Ovary (tissue), 10 donors: ENCODE measurements at regions of chr12 and their contacts with region 1.

Region 1: GRCh38 chr12:93243689-93244513 is 133.8 kb upstream of the NUDT4 start:
- DNase-seq: peak in 2 of 5 donors; percentile 40 to 57
- H3K4me3 ChIP-seq: no peak overlapping the region
- H3K27ac ChIP-seq: no peak overlapping the region
- H3K4me1 ChIP-seq: peaks cover 10% of the 10 kb centered on the region
- H3K27me3 ChIP-seq: no peaks in the 10 kb centered on the region
- CTCF ChIP-seq: no peak
- EP300 ChIP-seq: no peak
- POLR2A ChIP-seq: no peak

Region 2: DNA sequence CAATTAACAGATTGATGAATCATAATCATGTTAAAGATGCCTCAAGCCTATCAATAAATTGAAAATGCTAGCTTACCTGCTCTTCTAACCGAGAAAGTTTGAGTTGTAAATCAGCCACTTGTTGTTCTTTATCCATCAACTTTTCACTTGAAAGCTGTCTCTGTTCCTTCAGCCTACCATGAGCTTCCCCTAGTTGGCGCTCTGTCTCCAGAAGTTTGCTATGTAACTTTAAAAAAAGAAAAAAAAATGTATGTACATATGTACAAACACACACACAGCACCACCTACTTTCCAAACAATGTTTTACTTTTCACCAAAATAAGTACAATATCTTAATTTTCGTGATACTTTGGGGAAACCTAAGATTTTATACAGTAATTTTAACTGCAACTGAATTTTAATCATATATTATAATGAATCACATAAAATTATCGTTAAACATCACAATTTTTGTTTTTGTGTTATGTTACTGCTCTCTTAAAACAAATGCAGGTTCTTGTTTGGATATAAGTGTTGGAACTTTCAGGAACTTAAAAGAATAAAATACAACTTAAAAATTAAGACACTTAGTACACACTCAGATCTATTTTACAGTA is 416.0 kb before region 1 on chr12:
- intact Hi-C with region 1: no loop called
- DNase-seq: no peak
- H3K4me3 ChIP-seq: no peak overlapping the region
- H3K27ac ChIP-seq: no peak overlapping the region
- H3K4me1 ChIP-seq: no peaks in the 10 kb centered on the region
- H3K27me3 ChIP-seq: no peaks in the 10 kb centered on the region
- CTCF ChIP-seq: no peak
- EP300 ChIP-seq: no peak
- POLR2A ChIP-seq: no peak

Region 3: DNA sequence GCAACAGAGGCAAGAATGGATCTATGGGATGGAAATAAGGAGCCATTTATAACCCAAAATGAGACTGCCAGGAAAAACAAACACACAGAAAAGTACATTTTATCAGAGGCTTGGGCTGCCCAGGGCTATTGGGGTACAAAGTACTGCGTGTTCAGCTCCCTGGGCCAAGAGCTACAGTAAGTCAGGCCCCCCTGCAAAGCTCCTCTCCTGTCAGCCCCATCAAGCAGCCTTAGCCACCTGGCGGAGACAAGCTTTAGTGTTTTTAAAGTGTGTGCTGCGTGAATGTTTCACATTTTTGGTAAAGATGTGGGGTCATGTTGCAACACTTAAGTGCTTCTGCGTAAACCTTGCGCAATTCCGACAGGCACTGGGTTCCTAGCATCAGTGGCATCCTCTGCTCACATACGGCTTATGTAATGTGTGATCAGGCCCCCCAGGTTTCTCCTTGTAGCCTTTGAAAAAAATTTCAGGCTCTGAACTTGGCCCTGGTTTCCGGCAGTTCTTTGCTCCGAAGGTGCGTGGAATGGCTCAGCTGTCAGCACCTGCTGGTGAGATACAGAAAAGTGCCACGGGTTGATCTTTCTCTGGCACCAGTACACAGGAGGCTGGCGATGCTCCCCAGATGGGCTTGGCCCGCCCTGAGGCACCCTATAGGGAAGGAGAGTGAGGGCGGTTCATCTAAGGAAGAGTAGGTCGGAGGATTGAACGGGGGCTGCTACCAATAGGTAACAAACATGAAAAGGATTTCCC is 116.1 kb before region 1 on chr12:
- intact Hi-C with region 1: loop called in 1 of 4 experiments (anchors 10 kb)
- DNase-seq: peak; percentile 70 to 88 (median 80)
- H3K4me3 ChIP-seq: no peak overlapping the region
- H3K27ac ChIP-seq: peak overlapping the region; percentile 32 to 84
- H3K4me1 ChIP-seq: peaks cover 7% of the 10 kb centered on the region
- H3K27me3 ChIP-seq: no peaks in the 10 kb centered on the region
- CTCF ChIP-seq: peak in 2 of 3 donors; percentile 73 to 75
- EP300 ChIP-seq: no peak
- POLR2A ChIP-seq: no peak